ENCODE measurements at regions of chr12 and their contacts with region 1.

Region 1: GRCh38 chr12:77152623-77153193 is 87.3 kb upstream of the E2F7 start:
- DNase-seq: no peak
- ATAC-seq: no peak
- H3K4me3 ChIP-seq: no peak overlapping the region
- H3K27ac ChIP-seq: no peak overlapping the region
- H3K4me1 ChIP-seq: no peaks in the 10 kb centered on the region
- H3K27me3 ChIP-seq: no peaks in the 10 kb centered on the region
- CTCF ChIP-seq: peak in 4 of 7 experiments; percentile 21 to 39 (median 32)
- POLR2A ChIP-seq: no peak

Region 2: GRCh38 chr12:76680940-76681339 is 471.8 kb before region 1 on chr12:
- intact Hi-C with region 1: no loop called
- DNase-seq: no peak
- ATAC-seq: no peak
- H3K4me3 ChIP-seq: no peak overlapping the region
- H3K27ac ChIP-seq: no peak overlapping the region
- H3K4me1 ChIP-seq: peaks cover 26% of the 10 kb centered on the region
- H3K27me3 ChIP-seq: no peaks in the 10 kb centered on the region
- CTCF ChIP-seq: no peak
- POLR2A ChIP-seq: no peak

Region 3: GRCh38 chr12:77685112-77685511 is 532.4 kb after region 1 on chr12:
- intact Hi-C with region 1: loop called (anchors 10 kb)
- DNase-seq: peak; percentile 56 to 64 (median 58)
- ATAC-seq: peak; percentile 73
- H3K4me3 ChIP-seq: no peak overlapping the region
- H3K27ac ChIP-seq: no peak overlapping the region
- H3K4me1 ChIP-seq: peaks cover 4% of the 10 kb centered on the region
- H3K27me3 ChIP-seq: no peaks in the 10 kb centered on the region
- CTCF ChIP-seq: peak in 6 of 7 experiments; percentile 18 to 63 (median 56)
- POLR2A ChIP-seq: no peak